ENCODE measurements at regions of chr5 and their contacts with region 1.

Region 1: GRCh38 chr5:9544502-9545135 is 1.3 kb downstream of the SEMA5A start:
- DNase-seq: peak; percentile 39 to 58
- ATAC-seq: peak; percentile 75 to 77
- H3K4me3 ChIP-seq: peak overlapping the region; percentile 60 to 75 (median 68)
- H3K27ac ChIP-seq: peak overlapping the region; percentile 31 to 52 (median 48)
- H3K4me1 ChIP-seq: peaks cover 10 to 12% of the 10 kb centered on the region in 2 donors
- H3K27me3 ChIP-seq: peaks cover 0 to 7% (median 6%) of the 10 kb centered on the region in 3 donors
- CTCF ChIP-seq: peak; percentile 55 to 85 (median 79)
- POLR2A ChIP-seq: no peak

Region 2: DNA sequence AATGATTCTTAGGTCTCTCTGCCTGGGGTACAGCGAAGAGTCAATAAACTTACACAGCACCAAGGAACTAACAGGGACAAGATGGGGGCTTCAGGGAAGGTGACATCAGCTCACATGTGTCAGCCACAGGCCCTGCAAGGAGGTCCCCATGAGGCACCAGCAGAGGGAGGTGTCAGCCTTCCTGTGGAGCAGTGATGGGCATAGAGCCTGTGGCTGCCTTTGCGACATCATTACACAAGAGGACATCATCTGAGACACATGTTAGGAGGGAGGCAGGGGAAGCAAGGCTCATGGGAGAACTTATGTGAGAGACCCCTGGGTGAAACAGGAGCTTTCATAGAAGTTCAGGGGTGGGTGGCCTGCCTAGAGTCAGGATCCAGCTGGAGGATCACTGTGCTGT is 388.3 kb before region 1 on chr5:
- in situ Hi-C with region 1: no loop called
- intact Hi-C with region 1: loop called (anchors 1 kb)
- DNase-seq: peak in 1 of 2 donors; percentile 35
- ATAC-seq: peak in 1 of 2 donors; percentile 33
- H3K4me3 ChIP-seq: no peak overlapping the region
- H3K27ac ChIP-seq: no peak overlapping the region
- H3K4me1 ChIP-seq: no peaks in the 10 kb centered on the region
- H3K27me3 ChIP-seq: no peaks in the 10 kb centered on the region
- CTCF ChIP-seq: peak in 2 of 5 experiments; percentile 18 to 37
- POLR2A ChIP-seq: no peak

Region 3: DNA sequence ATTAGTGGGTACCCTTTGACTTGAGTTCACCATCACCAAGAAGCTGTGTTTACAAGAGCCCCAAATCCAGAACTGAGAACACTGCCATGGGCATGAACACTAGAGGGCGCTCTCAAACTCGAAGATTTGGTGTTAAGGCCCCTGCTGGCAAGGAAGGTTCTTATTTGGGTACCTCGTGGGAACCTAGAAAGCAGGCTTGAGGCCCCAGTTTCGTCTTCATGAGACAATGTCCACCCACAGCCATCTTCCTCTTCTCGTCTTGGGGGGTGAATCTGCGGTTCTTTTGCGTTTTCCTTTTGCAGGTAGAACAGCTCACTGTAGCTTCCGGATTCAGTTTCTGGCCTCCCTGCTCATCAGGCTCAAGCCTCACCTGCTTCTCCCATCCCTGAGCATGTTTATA is 182.8 kb before region 1 on chr5:
- in situ Hi-C with region 1: loop called in 1 of 4 experiments (anchors 25 kb)
- intact Hi-C with region 1: loop called (anchors 2 kb)
- DNase-seq: peak in 1 of 2 donors; percentile 16
- ATAC-seq: no peak
- H3K4me3 ChIP-seq: no peak overlapping the region
- H3K27ac ChIP-seq: no peak overlapping the region
- H3K4me1 ChIP-seq: no peaks in the 10 kb centered on the region
- H3K27me3 ChIP-seq: no peaks in the 10 kb centered on the region
- CTCF ChIP-seq: peak in 4 of 5 experiments; percentile 20 to 50 (median 32)
- POLR2A ChIP-seq: no peak

Measured in gastrocnemius medialis (tissue), 4 donors.